Activated B cell treated with CpG ODN at 0.5 μM for 24 hours (primary cell): ENCODE measurements at regions of chrX and their contacts with region 1.

Region 1: DNA sequence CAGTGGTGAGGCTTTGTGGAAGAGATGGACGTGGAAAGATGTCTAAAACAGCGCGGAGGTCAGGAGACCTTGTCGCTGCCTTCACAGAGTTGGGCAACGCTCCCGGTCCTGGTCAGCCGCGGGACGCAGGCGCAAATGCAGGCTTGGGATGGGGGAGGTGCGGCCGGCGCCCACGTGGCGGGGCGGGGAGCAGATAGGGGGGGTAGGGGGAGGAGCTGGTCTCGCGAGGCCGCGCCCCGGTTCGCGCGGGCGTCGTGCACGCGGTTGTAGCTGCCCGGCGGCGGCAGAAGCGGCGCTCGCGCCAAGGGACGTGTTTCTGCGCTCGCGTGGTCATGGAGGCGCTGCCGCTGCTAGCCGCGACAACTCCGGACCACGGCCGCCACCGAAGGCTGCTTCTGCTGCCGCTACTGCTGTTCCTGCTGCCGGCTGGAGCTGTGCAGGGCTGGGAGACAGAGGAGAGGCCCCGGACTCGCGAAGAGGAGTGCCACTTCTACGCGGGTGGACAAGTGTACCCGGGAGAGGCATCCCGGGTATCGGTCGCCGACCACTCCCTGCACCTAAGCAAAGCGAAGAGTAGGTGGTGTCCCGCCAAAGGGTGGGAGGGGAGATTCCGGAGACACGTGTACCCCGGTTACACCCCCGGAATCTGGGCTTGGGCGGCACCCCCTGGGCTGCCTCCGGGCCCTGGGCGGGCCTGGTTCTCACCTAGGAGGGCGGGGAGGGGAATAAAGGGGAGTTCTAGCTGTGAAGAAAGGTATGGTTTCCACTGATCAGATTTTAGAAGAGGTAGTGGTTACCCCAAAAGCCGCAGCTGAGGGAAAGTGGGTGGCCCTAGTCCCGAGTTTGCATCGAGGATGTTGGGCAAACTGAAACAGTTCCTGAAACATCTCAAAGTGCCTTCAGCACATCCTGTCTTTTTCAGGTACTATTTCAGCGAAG is at the start of gene PRDX4:
- DNase-seq: peak; percentile 66
- ATAC-seq: peak; percentile 85
- H3K4me3 Mint-ChIP-seq: peak within 1 kb of the TSS; percentile 84
- H3K27ac Mint-ChIP-seq: peak within 1 kb of the TSS; percentile 91
- H3K4me1 Mint-ChIP-seq: peaks cover 25% of the 10 kb centered on the region
- H3K27me3 Mint-ChIP-seq: no peaks in the 10 kb centered on the region
- CTCF ChIP-seq: no peak
- total RNA-seq, gene PRDX4: 29.2 and 35.5 TPM in 2 replicates

Region 2: DNA sequence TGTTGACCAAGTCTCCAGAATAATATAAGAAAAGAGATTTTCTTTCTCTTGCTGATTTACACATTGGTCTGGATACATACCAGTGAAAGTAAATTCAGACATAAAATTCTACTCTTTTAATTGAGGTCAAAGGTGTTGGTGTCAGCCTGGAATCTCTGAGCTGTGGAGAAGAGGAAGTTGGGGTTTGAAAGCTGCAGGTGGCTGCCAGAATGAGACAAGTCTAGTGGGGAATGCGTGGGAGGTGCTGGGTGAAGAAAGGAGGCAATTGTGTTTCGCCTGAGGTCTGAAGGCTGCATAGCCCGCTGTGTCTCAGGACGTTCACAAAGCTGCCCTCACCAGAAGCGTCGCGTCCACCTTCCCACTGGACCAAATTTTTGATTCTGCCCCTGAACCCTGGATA is 1604.2 kb before region 1 on chrX:
- CTCF ChIA-PET with region 1: no interaction called
- POLR2A ChIA-PET with region 1: no interaction called
- intact Hi-C with region 1: loop called (anchors 5 kb)
- DNase-seq: peak; percentile 25
- ATAC-seq: peak; percentile 90
- H3K4me3 Mint-ChIP-seq: peak overlapping the region; percentile 41
- H3K27ac Mint-ChIP-seq: peak overlapping the region; percentile 80
- H3K4me1 Mint-ChIP-seq: peaks cover 76% of the 10 kb centered on the region
- H3K27me3 Mint-ChIP-seq: no peaks in the 10 kb centered on the region
- CTCF ChIP-seq: no peak

Region 3: GRCh38 chrX:23773601-23774175 is 106.2 kb after region 1 on chrX:
- CTCF ChIA-PET with region 1: no interaction called
- POLR2A ChIA-PET with region 1: no interaction called
- intact Hi-C with region 1: loop called (anchors 2 kb)
- DNase-seq: no peak
- ATAC-seq: peak; percentile 88
- H3K4me3 Mint-ChIP-seq: peak overlapping the region; percentile 75
- H3K27ac Mint-ChIP-seq: peak overlapping the region; percentile 96
- H3K4me1 Mint-ChIP-seq: peaks cover 21% of the 10 kb centered on the region
- H3K27me3 Mint-ChIP-seq: no peaks in the 10 kb centered on the region
- CTCF ChIP-seq: no peak

Region 4: DNA sequence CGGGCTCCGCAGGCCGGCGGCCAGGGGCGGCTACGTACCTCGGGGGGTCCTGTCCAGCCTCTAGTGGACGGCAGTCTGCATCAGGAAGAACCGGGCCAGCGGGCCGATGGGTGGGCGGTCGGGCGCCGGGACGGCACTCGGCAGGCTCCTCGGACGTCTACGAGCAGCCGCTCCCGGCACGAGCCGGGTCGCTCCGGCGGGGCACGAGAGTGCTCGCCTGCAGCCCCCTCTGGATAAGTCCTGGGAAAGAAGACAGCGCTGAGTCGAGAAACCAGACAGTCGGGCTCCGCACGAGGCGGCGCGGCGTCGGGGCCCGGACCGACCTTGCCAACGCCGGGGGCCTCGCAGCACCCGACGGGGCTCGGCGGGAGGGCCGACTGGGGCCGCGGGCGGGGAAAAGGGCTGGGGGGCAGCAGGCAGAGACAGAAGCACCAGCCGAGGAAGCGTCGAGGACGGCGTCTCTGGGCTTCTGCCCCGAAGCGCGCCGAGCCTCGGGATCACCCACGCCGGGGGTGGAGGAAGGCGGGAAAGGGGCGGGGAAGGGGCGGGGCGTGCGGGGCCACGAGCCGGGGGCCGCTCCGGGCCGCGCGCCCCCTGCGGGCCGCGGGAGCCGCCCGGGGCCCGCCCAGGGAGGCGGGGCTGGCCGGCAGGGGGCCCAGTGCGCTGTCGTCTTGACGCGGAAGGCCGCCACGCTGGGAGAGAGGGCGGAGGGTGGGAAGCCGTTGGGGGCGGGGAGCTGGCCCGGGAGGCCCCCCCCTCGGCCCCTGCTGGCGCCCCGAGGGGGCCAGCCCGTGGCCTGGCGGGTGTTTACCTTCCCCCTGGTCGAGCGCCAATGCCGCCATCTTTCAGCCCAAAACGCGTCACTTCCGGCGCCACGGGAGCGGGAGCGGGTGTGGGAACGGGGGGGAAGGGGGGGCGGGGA is 357.6 kb after region 1 on chrX:
- CTCF ChIA-PET with region 1: no interaction called
- POLR2A ChIA-PET with region 1: no interaction called
- intact Hi-C with region 1: loop called (anchors 10 kb)
- DNase-seq: peak; percentile 70
- ATAC-seq: peak; percentile 91
- H3K4me3 Mint-ChIP-seq: peak overlapping the region; percentile 85
- H3K27ac Mint-ChIP-seq: peak overlapping the region; percentile 82
- H3K4me1 Mint-ChIP-seq: peaks cover 21% of the 10 kb centered on the region
- H3K27me3 Mint-ChIP-seq: no peaks in the 10 kb centered on the region
- CTCF ChIP-seq: no peak

Region 5: GRCh38 chrX:24693453-24694202 is 1026.1 kb after region 1 on chrX and contains the start of gene POLA1:
- CTCF ChIA-PET with region 1: no interaction called
- POLR2A ChIA-PET with region 1: no interaction called
- intact Hi-C with region 1: loop called (anchors 5 kb)
- DNase-seq: peak; percentile 64
- ATAC-seq: peak; percentile 94
- H3K4me3 Mint-ChIP-seq: peak within 1 kb of the TSS; percentile 92
- H3K27ac Mint-ChIP-seq: peak within 1 kb of the TSS; percentile 87
- H3K4me1 Mint-ChIP-seq: peaks cover 9% of the 10 kb centered on the region
- H3K27me3 Mint-ChIP-seq: no peaks in the 10 kb centered on the region
- CTCF ChIP-seq: no peak
- total RNA-seq, gene POLA1: 15.5 and 18.7 TPM in 2 replicates